ENCODE measurements at regions of chr2 and their contacts with region 1.

Region 1: DNA sequence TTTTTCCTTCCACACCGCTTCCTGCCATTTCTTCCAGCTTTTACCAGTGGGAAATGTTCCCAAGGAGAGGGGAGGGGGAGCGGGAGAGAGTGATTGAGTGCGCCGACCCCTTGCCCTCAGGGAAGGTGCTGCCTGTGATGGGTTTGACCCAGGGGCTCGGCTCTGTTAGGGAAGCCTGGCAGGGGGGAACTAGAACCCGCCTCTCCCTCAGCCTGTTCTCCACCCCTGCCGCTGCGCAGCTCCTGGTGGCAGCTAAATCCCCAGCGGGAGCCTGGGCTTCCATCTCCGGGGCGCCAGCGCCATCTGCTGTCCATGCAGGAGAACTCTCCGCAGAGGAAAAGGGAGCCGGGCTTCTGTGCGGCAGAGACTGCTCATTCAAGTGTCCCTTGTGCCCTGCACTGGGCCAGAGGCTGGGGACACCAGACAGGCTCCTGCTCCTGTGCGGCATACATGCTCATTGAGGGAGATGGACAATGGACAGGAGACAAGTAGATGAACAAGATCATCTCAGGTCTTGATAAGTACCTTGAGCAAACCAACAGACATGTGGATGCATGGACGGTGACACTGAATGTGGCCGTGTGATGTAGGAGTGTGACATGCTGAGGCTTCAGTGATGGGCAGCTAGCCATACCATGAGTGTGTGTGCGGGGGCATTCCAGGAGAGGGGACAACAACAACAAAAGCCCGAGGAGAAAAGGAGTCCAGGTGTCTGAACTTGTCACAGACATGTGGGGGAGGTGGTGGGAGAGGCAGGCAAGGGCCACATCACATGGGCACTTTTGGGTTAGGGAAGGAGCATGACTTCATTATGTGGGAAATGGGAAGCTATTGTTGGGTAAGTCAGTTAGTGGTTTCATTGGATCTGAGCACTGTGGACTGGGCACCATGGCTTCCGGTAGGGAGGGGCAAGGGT is 13.3 kb downstream of the CHPF start:
- DNase-seq: peak; percentile 81
- H3K4me3 ChIP-seq: no peak overlapping the region
- H3K27ac ChIP-seq: no peak overlapping the region
- H3K4me1 ChIP-seq: no peaks in the 10 kb centered on the region
- CTCF ChIP-seq: peak; percentile 95

Region 2: GRCh38 chr2:219402665-219403515 is 127.4 kb before region 1 on chr2:
- CTCF ChIA-PET with region 1: interaction called, 3 read pairs
- POLR2A ChIA-PET with region 1: no interaction called
- intact Hi-C with region 1: loop called (anchors 1 kb)
- DNase-seq: peak; percentile 79
- H3K4me3 ChIP-seq: no peak overlapping the region
- H3K27ac ChIP-seq: no peak overlapping the region
- H3K4me1 ChIP-seq: no peaks in the 10 kb centered on the region
- CTCF ChIP-seq: peak; percentile 98

Region 3: DNA sequence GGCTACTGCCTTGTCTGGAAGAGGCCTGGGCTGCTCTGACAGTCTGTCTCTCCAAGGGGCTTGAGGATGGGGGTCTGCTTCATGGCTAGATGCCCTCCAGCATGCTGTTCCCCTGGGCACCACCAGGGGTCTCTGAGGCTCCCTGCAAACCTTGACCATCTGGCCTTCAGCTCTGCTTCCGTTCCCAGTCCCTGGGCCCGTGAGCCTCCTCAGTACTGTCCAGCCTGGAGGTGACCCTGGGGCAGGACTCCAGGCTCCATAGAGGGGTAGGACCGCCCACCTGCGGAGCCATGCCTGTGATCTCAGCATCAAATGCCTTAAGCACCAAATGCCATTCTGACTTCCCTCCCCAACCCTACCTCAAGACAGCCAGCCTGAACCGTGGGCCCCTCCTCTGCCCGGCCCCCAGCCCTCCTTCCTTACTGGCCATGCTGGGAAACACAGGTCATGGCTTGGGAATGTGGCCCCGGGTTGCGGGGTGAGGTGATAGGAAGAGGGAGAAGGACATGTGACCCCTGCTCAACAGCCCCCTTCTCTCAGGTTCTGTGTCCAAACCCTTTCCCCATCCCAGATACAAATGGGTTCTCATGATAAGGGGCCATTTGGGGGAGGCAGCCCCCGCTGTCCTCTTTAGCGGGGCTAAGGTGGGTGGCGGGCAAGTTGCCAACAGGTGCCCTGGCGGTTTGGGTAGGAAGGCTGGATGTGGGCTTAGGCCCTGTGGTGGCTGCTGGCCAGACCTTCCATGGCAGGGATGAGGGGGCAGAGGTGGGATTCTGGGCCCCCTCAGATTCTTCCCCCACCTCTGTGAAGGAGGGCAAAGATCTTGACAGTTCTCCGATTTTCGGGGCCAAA is 70.6 kb before region 1 on chr2:
- CTCF ChIA-PET with region 1: no interaction called
- POLR2A ChIA-PET with region 1: no interaction called
- intact Hi-C with region 1: loop called (anchors 1 kb)
- DNase-seq: peak; percentile 55
- H3K4me3 ChIP-seq: no peak overlapping the region
- H3K27ac ChIP-seq: no peak overlapping the region
- H3K4me1 ChIP-seq: peaks cover 9% of the 10 kb centered on the region
- CTCF ChIP-seq: peak; percentile 84

Region 4: DNA sequence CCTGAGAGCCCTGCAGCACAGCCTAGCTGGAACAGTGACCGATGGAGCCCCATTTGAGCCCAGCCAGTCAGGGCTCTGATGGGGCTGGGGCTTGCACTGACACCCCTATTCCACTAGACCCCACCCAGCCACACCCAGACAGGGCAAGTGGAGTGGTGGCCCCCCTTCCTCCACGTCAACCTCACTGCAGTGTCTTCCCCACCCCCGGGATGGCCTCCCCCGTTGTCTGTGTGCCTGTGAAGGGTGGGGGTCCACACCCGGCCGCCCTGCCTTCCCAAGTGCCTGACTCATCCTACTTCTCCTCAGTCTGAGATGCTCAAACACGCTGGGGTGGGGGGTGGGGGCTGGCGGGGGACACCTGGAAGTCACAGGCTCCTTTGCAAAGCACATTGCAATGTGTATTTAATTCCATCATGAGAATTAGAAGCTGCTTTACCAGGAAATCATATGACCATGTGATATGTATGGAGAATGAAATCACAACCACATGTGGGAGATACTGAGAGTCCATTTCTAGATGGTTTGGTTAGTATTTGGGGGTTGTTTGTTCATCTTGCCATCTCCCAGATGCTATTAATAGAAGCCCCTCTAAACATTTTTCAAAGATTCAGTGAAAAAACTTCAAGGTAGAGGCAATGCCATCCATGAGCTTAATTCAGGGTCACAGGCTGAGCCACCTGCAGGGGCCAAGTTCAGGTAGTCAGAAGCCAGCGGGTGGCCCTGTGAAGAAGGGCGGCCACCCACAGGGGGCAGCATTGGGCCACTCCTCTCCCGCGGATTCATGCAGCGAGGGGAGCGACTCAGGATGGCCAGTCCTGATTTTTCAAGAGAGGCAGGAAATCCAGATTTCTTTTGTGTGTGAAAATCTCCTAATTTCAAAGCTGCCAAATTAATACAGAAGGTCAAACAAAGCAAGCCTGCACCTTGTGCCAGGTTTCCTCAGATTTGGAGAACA is 54.3 kb before region 1 on chr2:
- CTCF ChIA-PET with region 1: interaction called, 3 read pairs
- POLR2A ChIA-PET with region 1: no interaction called
- intact Hi-C with region 1: loop called (anchors 1 kb)
- DNase-seq: peak; percentile 62
- H3K4me3 ChIP-seq: no peak overlapping the region
- H3K27ac ChIP-seq: no peak overlapping the region
- H3K4me1 ChIP-seq: no peaks in the 10 kb centered on the region
- CTCF ChIP-seq: peak; percentile 89

Region 5: GRCh38 chr2:219495531-219496122 is 34.7 kb before region 1 on chr2:
- CTCF ChIA-PET with region 1: interaction called, 23 read pairs
- POLR2A ChIA-PET with region 1: no interaction called
- intact Hi-C with region 1: loop called (anchors 1 kb)
- DNase-seq: peak; percentile 83
- H3K4me3 ChIP-seq: no peak overlapping the region
- H3K27ac ChIP-seq: no peak overlapping the region
- H3K4me1 ChIP-seq: peaks cover 23% of the 10 kb centered on the region
- CTCF ChIP-seq: peak; percentile 83